ENCODE measurements at regions of chr12 and their contacts with region 1.

Region 1: GRCh38 chr12:13100882-13101769 is 2.3 kb downstream of the GSG1 start:
- DNase-seq: peak; percentile 86 to 97 (median 93)
- ATAC-seq: peak; percentile 87
- H3K4me3 ChIP-seq: peak overlapping the region; percentile 55 to 77
- H3K4me3 Mint-ChIP-seq: peak overlapping the region; percentile 81
- H3K27ac ChIP-seq: peak overlapping the region; percentile 83 to 95
- H3K27ac Mint-ChIP-seq: peak overlapping the region; percentile 89
- H3K4me1 ChIP-seq: peaks cover 27% of the 10 kb centered on the region
- H3K4me1 Mint-ChIP-seq: peaks cover 36% of the 10 kb centered on the region
- H3K27me3 ChIP-seq: no peaks in the 10 kb centered on the region
- H3K27me3 Mint-ChIP-seq: no peaks in the 10 kb centered on the region
- CTCF ChIP-seq: no peak

Region 2: GRCh38 chr12:11171145-11171968 is 1929.8 kb before region 1 on chr12 and contains the start of gene SMIM10L1:
- CTCF ChIA-PET with region 1: no interaction called
- POLR2A ChIA-PET with region 1: no interaction called
- intact Hi-C with region 1: loop called in 1 of 2 experiments (anchors 5 kb)
- DNase-seq: peak; percentile 78 to 95 (median 88)
- ATAC-seq: peak; percentile 91
- H3K4me3 ChIP-seq: peak within 1 kb of the TSS; percentile 56 to 73
- H3K4me3 Mint-ChIP-seq: peak within 1 kb of the TSS; percentile 99
- H3K27ac ChIP-seq: peak within 1 kb of the TSS; percentile 72 to 86
- H3K27ac Mint-ChIP-seq: peak within 1 kb of the TSS; percentile 100
- H3K4me1 ChIP-seq: peaks cover 38% of the 10 kb centered on the region
- H3K4me1 Mint-ChIP-seq: peaks cover 66% of the 10 kb centered on the region
- H3K27me3 ChIP-seq: no peaks in the 10 kb centered on the region
- H3K27me3 Mint-ChIP-seq: no peaks in the 10 kb centered on the region
- CTCF ChIP-seq: no peak
- total RNA-seq, gene SMIM10L1: 9.2 to 9.6 TPM

Region 3: GRCh38 chr12:12482959-12483358 is 618.2 kb before region 1 on chr12:
- CTCF ChIA-PET with region 1: no interaction called
- POLR2A ChIA-PET with region 1: no interaction called
- intact Hi-C with region 1: no loop called
- DNase-seq: no peak
- ATAC-seq: no peak
- H3K4me3 ChIP-seq: peak overlapping the region in 1 of 2 experiments; percentile 11
- H3K4me3 Mint-ChIP-seq: peak overlapping the region; percentile 47
- H3K27ac ChIP-seq: peak overlapping the region; percentile 73 to 83
- H3K27ac Mint-ChIP-seq: peak overlapping the region; percentile 99
- H3K4me1 ChIP-seq: peaks cover 28% of the 10 kb centered on the region
- H3K4me1 Mint-ChIP-seq: peaks cover 52% of the 10 kb centered on the region
- H3K27me3 ChIP-seq: no peaks in the 10 kb centered on the region
- H3K27me3 Mint-ChIP-seq: no peaks in the 10 kb centered on the region
- CTCF ChIP-seq: no peak

Region 4: GRCh38 chr12:12999959-13000615 is 101.0 kb before region 1 on chr12 and contains the start of gene HEBP1:
- CTCF ChIA-PET with region 1: no interaction called
- POLR2A ChIA-PET with region 1: no interaction called
- intact Hi-C with region 1: loop called (anchors 1 to 2 kb)
- DNase-seq: peak; percentile 90 to 98 (median 96)
- ATAC-seq: peak; percentile 95
- H3K4me3 ChIP-seq: peak within 1 kb of the TSS; percentile 84 to 85
- H3K4me3 Mint-ChIP-seq: peak within 1 kb of the TSS; percentile 96
- H3K27ac ChIP-seq: peak within 1 kb of the TSS; percentile 41 to 55
- H3K27ac Mint-ChIP-seq: peak within 1 kb of the TSS; percentile 82
- H3K4me1 ChIP-seq: peaks cover 20% of the 10 kb centered on the region
- H3K4me1 Mint-ChIP-seq: peaks cover 29% of the 10 kb centered on the region
- H3K27me3 ChIP-seq: peaks cover 0 to 4% of the 10 kb centered on the region in 2 experiments
- H3K27me3 Mint-ChIP-seq: peaks cover 6% of the 10 kb centered on the region
- CTCF ChIP-seq: no peak
- total RNA-seq, gene HEBP1: 4.6 to 5.6 TPM

Region 5: GRCh38 chr12:13044002-13044905 is 56.9 kb before region 1 on chr12 and contains the start of gene FAM234B:
- CTCF ChIA-PET with region 1: no interaction called
- POLR2A ChIA-PET with region 1: no interaction called
- intact Hi-C with region 1: loop called in 1 of 2 experiments (anchors 5 kb)
- DNase-seq: peak; percentile 44 to 84 (median 71)
- ATAC-seq: peak; percentile 96
- H3K4me3 ChIP-seq: peak within 1 kb of the TSS; percentile 69 to 96
- H3K4me3 Mint-ChIP-seq: peak within 1 kb of the TSS; percentile 86
- H3K27ac ChIP-seq: peak within 1 kb of the TSS in 1 of 2 experiments; percentile 56
- H3K27ac Mint-ChIP-seq: peak within 1 kb of the TSS; percentile 63
- H3K4me1 ChIP-seq: peaks cover 5% of the 10 kb centered on the region
- H3K4me1 Mint-ChIP-seq: peaks cover 21% of the 10 kb centered on the region
- H3K27me3 ChIP-seq: no peaks in the 10 kb centered on the region
- H3K27me3 Mint-ChIP-seq: no peaks in the 10 kb centered on the region
- CTCF ChIP-seq: peak; percentile 13
- total RNA-seq, gene FAM234B: 2.2 to 2.7 TPM

Region 6: DNA sequence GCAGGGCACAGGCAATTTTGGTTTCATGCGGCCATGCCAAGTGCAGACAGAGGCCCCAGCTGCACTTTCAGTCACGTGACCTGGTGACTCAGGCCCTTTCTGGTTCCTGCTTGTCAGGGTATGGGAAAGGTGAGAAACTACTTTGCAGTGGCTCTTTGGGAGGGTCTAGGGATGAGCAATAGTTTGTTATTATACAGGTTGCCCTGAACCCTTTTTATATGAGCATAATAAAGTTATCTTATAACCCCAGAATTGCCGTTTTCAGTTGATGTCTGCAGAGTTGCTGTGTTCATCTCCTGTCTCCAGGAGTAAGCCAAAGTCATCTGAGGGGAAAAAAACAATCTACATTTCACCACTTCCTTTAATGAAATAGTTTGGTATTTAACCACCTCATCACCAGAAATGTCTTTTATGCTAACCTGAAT is 64.5 kb after region 1 on chr12:
- CTCF ChIA-PET with region 1: no interaction called
- POLR2A ChIA-PET with region 1: no interaction called
- intact Hi-C with region 1: loop called in 1 of 2 experiments (anchors 1 kb)
- DNase-seq: peak in 8 of 9 experiments; percentile 58 to 80 (median 70)
- ATAC-seq: peak; percentile 82
- H3K4me3 ChIP-seq: peak overlapping the region in 1 of 2 experiments; percentile 2
- H3K4me3 Mint-ChIP-seq: peak overlapping the region; percentile 1
- H3K27ac ChIP-seq: no peak overlapping the region
- H3K27ac Mint-ChIP-seq: peak overlapping the region; percentile 49
- H3K4me1 ChIP-seq: peaks cover 16% of the 10 kb centered on the region
- H3K4me1 Mint-ChIP-seq: peaks cover 20% of the 10 kb centered on the region
- H3K27me3 ChIP-seq: no peaks in the 10 kb centered on the region
- H3K27me3 Mint-ChIP-seq: no peaks in the 10 kb centered on the region
- CTCF ChIP-seq: no peak

Region 7: DNA sequence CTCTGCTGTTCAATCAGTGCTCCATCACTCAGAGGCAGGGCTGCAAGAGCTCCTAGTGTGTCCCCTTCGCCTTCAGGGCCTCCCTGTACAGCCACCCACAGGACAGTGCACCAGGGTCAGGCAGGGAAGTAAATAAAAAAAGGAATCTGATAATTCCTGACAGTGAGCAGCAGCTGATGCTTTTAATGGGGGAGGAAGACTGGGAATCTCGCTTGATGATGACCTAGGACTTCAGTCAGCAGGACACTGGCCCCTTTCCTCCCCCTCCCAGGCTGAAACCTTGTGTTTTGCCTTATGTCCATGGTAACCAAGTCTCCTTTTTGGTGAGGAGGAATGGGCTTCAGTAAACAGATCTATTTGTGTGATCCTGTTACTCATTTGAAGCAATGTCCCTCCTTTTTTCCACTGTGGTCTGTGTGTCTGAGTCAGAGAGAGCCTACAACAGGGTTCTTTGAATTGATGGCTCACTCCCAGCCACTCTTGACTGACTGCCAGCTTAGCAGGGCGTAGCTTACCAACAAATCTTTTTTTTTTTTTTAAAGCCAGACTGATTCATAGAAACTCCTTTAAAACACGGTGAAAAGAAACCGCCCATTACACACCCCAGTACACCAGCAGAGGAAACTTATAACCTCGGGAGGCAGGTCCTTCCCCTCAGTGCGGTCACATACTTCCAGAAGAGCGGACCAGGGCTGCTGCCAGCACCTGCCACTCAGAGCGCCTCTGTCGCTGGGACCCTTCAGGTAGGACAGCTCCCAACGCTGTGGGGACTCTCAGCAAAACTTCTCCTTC is 95.2 kb after region 1 on chr12 and contains the start of gene EMP1:
- CTCF ChIA-PET with region 1: no interaction called
- POLR2A ChIA-PET with region 1: no interaction called
- intact Hi-C with region 1: loop called in 1 of 2 experiments (anchors 1 kb)
- DNase-seq: peak; percentile 10 to 85 (median 67)
- ATAC-seq: peak; percentile 90
- H3K4me3 ChIP-seq: peak within 1 kb of the TSS; percentile 23 to 44
- H3K4me3 Mint-ChIP-seq: peak within 1 kb of the TSS; percentile 76
- H3K27ac ChIP-seq: no peak within 1 kb of the TSS
- H3K27ac Mint-ChIP-seq: peak within 1 kb of the TSS; percentile 34
- H3K4me1 ChIP-seq: peaks cover 14% of the 10 kb centered on the region
- H3K4me1 Mint-ChIP-seq: peaks cover 18% of the 10 kb centered on the region
- H3K27me3 ChIP-seq: no peaks in the 10 kb centered on the region
- H3K27me3 Mint-ChIP-seq: no peaks in the 10 kb centered on the region
- CTCF ChIP-seq: no peak
- total RNA-seq, gene EMP1: 4.4 to 5.0 TPM

Region 8: GRCh38 chr12:14167005-14167628 is 1066.0 kb after region 1 on chr12:
- CTCF ChIA-PET with region 1: no interaction called
- POLR2A ChIA-PET with region 1: no interaction called
- intact Hi-C with region 1: loop called in 1 of 2 experiments (anchors 5 kb)
- DNase-seq: peak in 7 of 9 experiments; percentile 4 to 55 (median 42)
- ATAC-seq: peak; percentile 48
- H3K4me3 ChIP-seq: no peak overlapping the region
- H3K4me3 Mint-ChIP-seq: no peak overlapping the region
- H3K27ac ChIP-seq: no peak overlapping the region
- H3K27ac Mint-ChIP-seq: no peak overlapping the region
- H3K4me1 ChIP-seq: no peaks in the 10 kb centered on the region
- H3K4me1 Mint-ChIP-seq: peaks cover 3% of the 10 kb centered on the region
- H3K27me3 ChIP-seq: no peaks in the 10 kb centered on the region
- H3K27me3 Mint-ChIP-seq: peaks cover 5% of the 10 kb centered on the region
- CTCF ChIP-seq: peak; percentile 91

Measured in CD8-positive, alpha-beta T cell (primary cell).